ENCODE measurements at regions of chr4 and their contacts with region 1.

Region 1: GRCh38 chr4:158768555-158769174 is at the start of gene FNIP2:
- DNase-seq: peak; percentile 65
- H3K4me3 Mint-ChIP-seq: peak within 1 kb of the TSS; percentile 100
- H3K27ac Mint-ChIP-seq: peak within 1 kb of the TSS; percentile 96
- H3K4me1 Mint-ChIP-seq: peaks cover 43% of the 10 kb centered on the region
- H3K27me3 Mint-ChIP-seq: peaks cover 8% of the 10 kb centered on the region
- total RNA-seq, gene FNIP2: 10.5 and 11.9 TPM in 2 replicates

Region 2: DNA sequence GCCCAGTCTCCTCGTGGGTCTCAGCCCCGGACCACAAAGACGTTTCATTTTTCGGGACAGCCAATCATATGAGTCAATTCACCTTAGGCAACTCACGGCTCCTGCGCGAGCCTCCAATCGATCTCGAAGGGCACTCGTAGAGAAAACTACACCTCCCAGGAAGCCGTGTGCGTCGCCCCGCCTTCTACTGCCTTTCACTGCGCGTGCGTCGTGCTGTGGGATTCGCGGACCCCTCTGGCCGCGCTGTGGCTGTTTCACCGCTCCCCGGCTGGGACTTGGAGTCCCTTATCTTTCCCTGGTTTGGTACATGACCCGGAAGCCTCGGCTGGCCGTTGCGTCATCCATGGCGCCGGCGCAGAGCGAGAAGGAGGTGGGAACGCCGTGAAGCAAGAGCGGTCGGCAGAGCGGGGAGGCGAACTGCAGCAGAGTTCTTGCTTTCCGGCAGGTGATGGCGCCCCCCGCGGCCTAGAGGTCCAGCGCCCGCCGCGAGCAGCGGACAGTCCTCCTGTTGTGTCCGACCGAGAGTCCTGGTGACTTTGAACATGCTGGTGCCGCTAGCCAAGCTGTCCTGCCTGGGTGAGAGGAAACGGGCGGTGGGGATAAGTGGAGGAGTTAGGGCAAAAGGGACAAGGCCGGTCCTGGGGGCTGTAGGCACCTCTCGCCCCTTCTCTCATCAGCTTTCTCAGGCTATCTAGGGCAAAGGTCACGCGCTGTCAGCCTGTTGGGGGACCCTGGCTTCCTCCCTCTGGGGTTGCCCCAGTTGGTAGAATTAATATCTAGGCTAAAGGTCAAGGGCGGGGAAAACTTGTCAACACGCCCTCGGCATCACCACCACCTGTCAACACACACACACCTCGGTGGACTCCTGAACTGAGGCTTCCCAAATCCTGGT is 96.5 kb before region 1 on chr4 and contains the start of gene ETFDH:
- intact Hi-C with region 1: loop called (anchors 1 kb)
- DNase-seq: peak; percentile 98
- H3K4me3 Mint-ChIP-seq: peak within 1 kb of the TSS; percentile 98
- H3K27ac Mint-ChIP-seq: peak within 1 kb of the TSS; percentile 95
- H3K4me1 Mint-ChIP-seq: peaks cover 25% of the 10 kb centered on the region
- H3K27me3 Mint-ChIP-seq: no peaks in the 10 kb centered on the region
- total RNA-seq, gene ETFDH: 21.6 and 23.8 TPM in 2 replicates

Region 3: DNA sequence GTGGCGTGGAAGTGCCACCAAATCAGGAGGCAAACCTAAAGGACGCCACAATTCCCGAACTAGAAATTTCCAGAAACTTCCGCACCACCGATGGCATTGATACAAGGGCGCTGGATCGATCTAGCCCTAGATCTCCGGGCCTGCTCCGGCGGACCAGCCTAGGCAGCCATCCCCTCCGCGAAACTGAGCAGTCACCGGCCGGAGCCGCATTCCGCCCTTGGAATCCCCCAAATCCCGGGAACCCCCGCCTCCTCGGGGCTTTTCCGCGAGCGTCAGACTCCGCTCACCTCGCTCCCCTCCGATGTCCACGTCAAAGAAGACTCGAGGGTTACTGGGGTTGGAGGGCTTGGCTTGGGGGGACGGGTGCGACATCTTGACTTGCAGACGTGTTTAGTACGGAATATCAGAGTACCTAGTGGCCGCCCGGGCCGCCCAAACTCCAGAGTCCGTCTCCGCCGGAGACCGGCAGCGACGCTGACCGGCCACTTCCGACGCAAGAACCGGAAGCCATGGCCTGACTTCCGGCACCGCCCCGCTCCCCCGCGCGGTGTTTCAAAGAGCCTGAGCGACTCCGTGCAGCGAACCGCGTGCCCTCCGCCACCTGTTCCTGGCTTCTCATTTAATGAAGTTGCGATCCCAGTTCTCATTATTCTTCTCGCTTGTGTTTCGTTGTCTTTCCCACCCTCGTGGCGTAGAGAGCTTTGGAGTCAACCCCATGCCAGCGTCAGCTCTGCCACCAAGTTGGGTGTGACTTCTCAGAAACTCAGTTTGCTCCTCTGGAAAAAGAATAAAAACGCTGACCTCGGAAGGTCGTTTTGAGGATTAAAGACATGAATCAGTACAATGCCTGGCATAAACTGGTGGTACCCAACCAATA is 45.5 kb before region 1 on chr4 and contains the start of gene PPID:
- intact Hi-C with region 1: loop called (anchors 2 kb)
- DNase-seq: peak; percentile 77
- H3K4me3 Mint-ChIP-seq: peak within 1 kb of the TSS; percentile 95
- H3K27ac Mint-ChIP-seq: peak within 1 kb of the TSS; percentile 98
- H3K4me1 Mint-ChIP-seq: peaks cover 50% of the 10 kb centered on the region
- H3K27me3 Mint-ChIP-seq: peaks cover 2% of the 10 kb centered on the region
- total RNA-seq, gene PPID: 56.8 and 58.5 TPM in 2 replicates

Region 4: GRCh38 chr4:158729716-158730559 is 38.7 kb before region 1 on chr4:
- intact Hi-C with region 1: loop called (anchors 2 kb)
- DNase-seq: peak; percentile 28
- H3K4me3 Mint-ChIP-seq: no peak overlapping the region
- H3K27ac Mint-ChIP-seq: no peak overlapping the region
- H3K4me1 Mint-ChIP-seq: peaks cover 30% of the 10 kb centered on the region
- H3K27me3 Mint-ChIP-seq: peaks cover 30% of the 10 kb centered on the region

Region 5: DNA sequence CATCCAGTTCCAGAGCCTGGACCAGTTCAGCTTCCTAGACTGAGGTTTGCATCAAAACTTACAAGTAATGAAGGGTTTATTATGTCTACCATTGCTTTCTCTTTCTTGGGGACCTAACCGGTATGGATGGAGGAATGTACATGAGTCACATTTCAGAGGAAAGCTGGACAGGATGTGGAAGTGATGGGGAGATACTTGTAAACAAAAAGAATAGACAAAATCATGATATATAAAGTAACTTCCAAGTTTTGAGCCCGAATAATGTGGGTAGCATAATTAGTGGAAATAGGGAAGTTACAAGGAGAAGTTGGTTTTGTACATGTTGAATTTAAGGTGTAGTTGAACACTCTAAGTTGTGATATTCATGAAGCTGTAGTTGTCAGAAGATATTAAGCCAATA is 15.1 kb after region 1 on chr4:
- intact Hi-C with region 1: no loop called
- DNase-seq: no peak
- H3K4me3 Mint-ChIP-seq: no peak overlapping the region
- H3K27ac Mint-ChIP-seq: no peak overlapping the region
- H3K4me1 Mint-ChIP-seq: peaks cover 37% of the 10 kb centered on the region
- H3K27me3 Mint-ChIP-seq: no peaks in the 10 kb centered on the region

Region 6: DNA sequence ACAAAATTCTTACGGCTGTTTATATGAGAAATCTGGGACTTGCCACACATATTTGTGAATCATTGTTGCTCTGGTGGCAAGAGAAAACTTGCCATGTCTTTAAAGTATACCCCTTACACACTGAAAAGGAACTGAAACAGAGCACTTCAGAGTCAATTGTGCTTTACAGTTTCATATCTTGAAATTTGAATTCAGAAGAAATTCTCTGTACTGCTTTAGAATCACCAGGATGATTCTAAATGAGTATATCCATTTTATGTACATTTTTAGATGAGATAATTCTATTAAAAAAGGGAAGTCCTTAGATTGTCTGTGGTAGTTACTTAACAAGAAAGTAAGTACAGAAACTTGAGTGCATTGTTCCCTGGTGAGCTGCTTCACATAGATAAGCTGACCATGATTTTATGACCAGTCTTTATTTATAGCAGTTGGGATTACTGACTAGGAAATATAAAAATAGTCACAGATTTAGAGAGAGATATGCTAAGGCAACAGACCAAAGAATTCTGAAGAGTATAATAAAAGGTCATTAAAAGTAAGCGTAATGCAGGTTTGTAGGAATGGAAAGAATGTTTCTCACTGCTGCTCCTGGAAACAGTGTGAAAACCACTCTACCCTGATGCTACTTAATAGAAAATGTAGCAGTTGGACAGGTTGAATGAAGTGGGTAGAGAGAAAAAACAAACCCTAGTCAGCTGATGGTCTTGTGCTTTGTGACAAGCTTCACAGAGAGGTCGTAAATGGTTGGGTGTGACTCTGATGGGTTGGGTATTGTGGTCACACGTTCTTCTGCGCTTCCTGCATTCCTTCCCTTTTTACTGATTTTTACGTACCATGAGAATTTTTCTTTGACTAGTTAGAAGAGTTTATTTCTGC is 41.2 kb after region 1 on chr4:
- intact Hi-C with region 1: loop called (anchors 2 kb)
- DNase-seq: no peak
- H3K4me3 Mint-ChIP-seq: peak overlapping the region; percentile 74
- H3K27ac Mint-ChIP-seq: peak overlapping the region; percentile 88
- H3K4me1 Mint-ChIP-seq: peaks cover 45% of the 10 kb centered on the region
- H3K27me3 Mint-ChIP-seq: no peaks in the 10 kb centered on the region

Region 7: GRCh38 chr4:158884280-158884679 is 115.6 kb after region 1 on chr4:
- intact Hi-C with region 1: no loop called
- DNase-seq: no peak
- H3K4me3 Mint-ChIP-seq: no peak overlapping the region
- H3K27ac Mint-ChIP-seq: no peak overlapping the region
- H3K4me1 Mint-ChIP-seq: no peaks in the 10 kb centered on the region
- H3K27me3 Mint-ChIP-seq: no peaks in the 10 kb centered on the region

Measured in activated T-helper 2 cell treated with anti-CD3 and anti-CD28 coated beads, Interferon-gamma antibody, Interleukin-2, Interleukin-4, amounts not matched to agents 10 μg/mL and 5 μg/mL and 100 μg/mL, durations not matched to agents 14 hours and 24 hours and 36 hours (primary cell).